CD8-positive, alpha-beta T cell (primary cell): ENCODE measurements at regions of chr16 and their contacts with region 1.

Region 1: DNA sequence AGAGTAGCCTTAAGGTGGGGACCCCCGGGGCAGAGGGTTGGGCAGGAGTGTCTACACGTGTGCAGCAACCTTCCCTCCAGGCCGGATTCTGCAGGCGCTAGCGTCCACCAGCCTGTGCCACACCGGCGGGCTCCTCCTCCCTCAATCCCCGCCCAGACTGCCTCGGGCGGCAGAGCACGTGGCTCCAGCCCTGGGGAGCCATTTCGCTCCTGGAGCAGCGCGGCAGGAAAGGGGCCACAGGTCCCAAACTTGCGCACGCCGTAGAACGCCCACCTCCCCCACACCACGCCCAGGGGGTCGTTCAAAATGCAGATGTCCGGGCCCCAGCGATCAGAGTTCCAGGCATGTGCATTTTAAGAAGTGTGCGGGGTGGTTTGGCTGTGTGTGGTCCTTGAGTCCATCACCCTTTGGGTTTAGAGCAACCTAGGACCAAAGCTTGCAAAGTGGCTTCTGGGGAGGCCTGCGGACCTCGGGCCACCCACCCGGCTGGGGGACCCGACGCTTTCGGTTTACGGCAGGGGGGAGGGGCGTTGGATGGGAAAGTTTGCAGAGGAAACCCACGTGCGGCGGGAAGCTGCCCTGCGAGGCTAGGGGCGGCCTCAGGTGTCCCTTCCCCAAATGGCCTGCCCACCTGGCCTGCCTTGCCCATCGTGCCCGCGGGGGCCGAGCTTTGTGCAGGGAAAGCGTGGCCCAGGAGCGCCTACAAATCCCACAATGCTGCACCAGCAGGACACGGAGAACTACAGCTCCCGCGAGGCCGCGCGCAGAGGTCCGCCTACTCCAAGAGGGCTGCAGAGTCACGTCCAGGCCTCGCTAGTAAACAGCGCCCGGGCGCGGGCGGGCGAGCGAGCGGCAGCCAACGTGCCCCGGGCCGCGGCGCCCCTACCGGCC is 1.4 kb downstream of the TFAP4 start:
- DNase-seq: peak; percentile 72 to 93 (median 89)
- ATAC-seq: peak; percentile 84
- H3K4me3 ChIP-seq: peak overlapping the region; percentile 91 to 99
- H3K4me3 Mint-ChIP-seq: peak overlapping the region; percentile 88
- H3K27ac ChIP-seq: peak overlapping the region; percentile 50 to 76
- H3K27ac Mint-ChIP-seq: peak overlapping the region; percentile 57
- H3K4me1 ChIP-seq: peaks cover 13% of the 10 kb centered on the region
- H3K4me1 Mint-ChIP-seq: peaks cover 15% of the 10 kb centered on the region
- H3K27me3 ChIP-seq: no peaks in the 10 kb centered on the region
- H3K27me3 Mint-ChIP-seq: no peaks in the 10 kb centered on the region
- CTCF ChIP-seq: no peak

Region 2: DNA sequence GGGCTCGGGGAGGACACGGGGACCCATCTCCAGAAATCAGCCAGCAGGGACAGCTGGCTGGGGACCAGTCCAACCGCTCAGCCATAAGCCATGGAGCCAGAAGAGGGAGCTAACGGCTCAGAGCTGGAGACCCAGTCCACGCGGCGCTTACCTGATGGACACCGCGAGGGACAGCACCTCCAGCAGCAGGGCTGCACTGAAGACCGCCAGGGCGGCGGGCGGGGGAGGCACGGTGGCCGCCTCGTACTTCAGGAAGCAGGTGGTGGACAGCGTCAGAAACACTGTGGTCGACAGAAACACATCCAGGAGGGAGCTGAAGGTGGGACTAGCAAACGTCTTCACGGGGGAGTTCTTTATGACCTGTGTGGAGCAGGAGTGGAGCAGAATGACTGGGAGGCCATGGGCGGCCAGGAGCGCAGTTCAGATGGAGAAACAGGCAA is 288.3 kb before region 1 on chr16:
- CTCF ChIA-PET with region 1: no interaction called
- POLR2A ChIA-PET with region 1: no interaction called
- intact Hi-C with region 1: loop called in 1 of 2 experiments (anchors 5 kb)
- DNase-seq: peak in 8 of 9 experiments; percentile 9 to 68 (median 48)
- ATAC-seq: peak; percentile 48
- H3K4me3 ChIP-seq: no peak overlapping the region
- H3K4me3 Mint-ChIP-seq: no peak overlapping the region
- H3K27ac ChIP-seq: no peak overlapping the region
- H3K27ac Mint-ChIP-seq: no peak overlapping the region
- H3K4me1 ChIP-seq: peaks cover 4% of the 10 kb centered on the region
- H3K4me1 Mint-ChIP-seq: peaks cover 4% of the 10 kb centered on the region
- H3K27me3 ChIP-seq: no peaks in the 10 kb centered on the region
- H3K27me3 Mint-ChIP-seq: no peaks in the 10 kb centered on the region
- CTCF ChIP-seq: peak; percentile 31

Region 3: DNA sequence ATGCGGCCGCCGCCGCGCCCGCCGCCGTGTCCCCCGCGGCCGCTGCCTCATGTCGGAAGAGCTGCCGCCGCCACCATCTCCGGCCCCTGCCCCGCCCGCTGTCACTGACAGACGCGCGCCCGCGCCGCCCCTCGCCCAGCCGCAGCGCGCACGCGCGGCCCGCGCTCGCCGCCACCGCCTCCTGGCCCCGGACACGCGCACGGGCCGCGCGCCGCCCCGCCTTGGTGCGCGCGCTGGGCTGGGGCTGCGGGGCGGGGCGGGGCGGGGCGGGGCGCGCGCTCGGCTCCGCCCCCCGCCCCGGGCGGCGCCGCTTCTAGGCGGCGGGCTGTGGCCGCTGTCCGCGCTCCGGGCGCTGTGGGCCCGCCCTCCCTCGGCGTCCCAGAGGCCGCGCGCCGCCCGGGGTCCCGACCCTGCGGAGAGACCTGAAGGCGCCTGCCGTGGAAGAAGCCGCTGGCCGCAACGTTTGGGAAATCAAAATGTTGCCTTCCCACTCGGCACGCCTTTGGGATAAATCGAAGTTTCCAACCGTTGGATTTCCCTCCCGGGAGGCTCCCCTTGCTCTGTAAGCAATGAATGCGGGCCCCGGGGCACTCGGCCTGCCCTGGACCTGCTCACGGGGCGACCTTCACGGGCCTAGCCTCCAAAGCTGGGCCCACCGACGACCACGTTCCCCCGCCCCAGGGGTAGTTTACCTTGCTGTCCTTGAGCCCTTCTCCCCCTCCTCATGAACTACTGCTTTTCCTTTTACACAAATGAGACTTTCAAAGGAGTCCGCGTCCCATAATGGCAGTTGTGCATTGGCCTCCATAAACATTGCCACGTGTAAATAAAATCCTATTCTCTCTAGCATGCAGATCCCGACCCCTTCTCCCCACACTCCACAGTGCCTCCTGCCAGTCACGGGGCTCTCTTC is 154.8 kb before region 1 on chr16 and contains the start of gene ADCY9:
- CTCF ChIA-PET with region 1: no interaction called
- POLR2A ChIA-PET with region 1: interaction called, 5 read pairs
- intact Hi-C with region 1: loop called in 1 of 2 experiments (anchors 5 kb)
- DNase-seq: peak; percentile 31 to 92 (median 74)
- ATAC-seq: peak; percentile 77
- H3K4me3 ChIP-seq: peak within 1 kb of the TSS; percentile 55 to 64
- H3K4me3 Mint-ChIP-seq: peak within 1 kb of the TSS; percentile 87
- H3K27ac ChIP-seq: peak within 1 kb of the TSS in 1 of 2 experiments; percentile 39
- H3K27ac Mint-ChIP-seq: peak within 1 kb of the TSS; percentile 52
- H3K4me1 ChIP-seq: peaks cover 33% of the 10 kb centered on the region
- H3K4me1 Mint-ChIP-seq: peaks cover 40% of the 10 kb centered on the region
- H3K27me3 ChIP-seq: no peaks in the 10 kb centered on the region
- H3K27me3 Mint-ChIP-seq: peaks cover 3% of the 10 kb centered on the region
- CTCF ChIP-seq: no peak
- total RNA-seq, gene ADCY9: 4.2 to 4.3 TPM

Region 4: GRCh38 chr16:4160658-4161430 is 110.6 kb before region 1 on chr16:
- CTCF ChIA-PET with region 1: no interaction called
- POLR2A ChIA-PET with region 1: no interaction called
- intact Hi-C with region 1: no loop called
- DNase-seq: no peak
- ATAC-seq: no peak
- H3K4me3 ChIP-seq: no peak overlapping the region
- H3K4me3 Mint-ChIP-seq: no peak overlapping the region
- H3K27ac ChIP-seq: no peak overlapping the region
- H3K27ac Mint-ChIP-seq: no peak overlapping the region
- H3K4me1 ChIP-seq: no peaks in the 10 kb centered on the region
- H3K4me1 Mint-ChIP-seq: no peaks in the 10 kb centered on the region
- H3K27me3 ChIP-seq: no peaks in the 10 kb centered on the region
- H3K27me3 Mint-ChIP-seq: no peaks in the 10 kb centered on the region
- CTCF ChIP-seq: no peak

Region 5: DNA sequence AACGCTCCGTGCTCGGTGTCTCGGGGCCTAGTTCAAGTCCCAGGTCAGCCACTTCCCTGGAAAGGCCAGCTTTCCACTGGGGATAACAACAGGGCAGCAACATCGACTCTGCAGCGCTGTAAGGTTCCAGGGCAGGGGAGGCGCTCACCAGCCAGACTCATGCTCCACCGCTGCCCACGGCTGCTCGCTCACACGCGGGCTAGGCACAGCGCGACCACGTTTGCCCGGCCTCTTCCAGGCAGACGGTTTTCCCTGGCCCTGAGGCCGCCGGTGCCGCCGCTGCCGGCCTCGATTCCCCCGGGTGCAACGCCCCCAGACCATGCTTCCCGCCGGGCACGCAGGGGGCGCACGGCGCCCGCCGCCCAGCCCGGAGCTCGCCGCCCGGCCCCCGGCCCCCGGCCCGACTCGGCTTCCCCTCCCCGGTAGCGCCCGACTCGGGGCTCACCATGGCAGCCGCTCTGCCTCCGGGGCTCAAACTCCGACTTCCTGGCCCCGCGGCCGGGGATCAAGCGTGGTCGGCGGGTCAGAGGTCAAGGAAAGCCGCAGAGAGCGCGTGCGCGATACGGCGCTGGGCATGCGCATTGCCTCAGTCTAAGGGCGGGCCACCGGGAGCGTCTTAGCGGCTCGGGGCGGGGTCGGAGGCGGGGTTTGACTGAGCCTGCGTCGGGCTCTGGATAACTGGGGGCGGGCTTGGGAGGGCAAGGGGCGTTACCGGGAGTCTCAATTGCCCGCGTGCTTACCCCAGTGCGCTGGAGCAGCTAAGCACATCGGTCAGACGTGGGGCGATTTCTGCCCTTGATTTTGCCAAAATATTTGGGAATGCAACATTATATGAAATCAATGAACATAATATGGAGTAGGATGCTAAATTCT is 79.6 kb after region 1 on chr16 and contains the start of gene PAM16:
- CTCF ChIA-PET with region 1: no interaction called
- POLR2A ChIA-PET with region 1: interaction called, 6 read pairs
- intact Hi-C with region 1: loop called in 1 of 2 experiments (anchors 2 kb)
- DNase-seq: peak; percentile 93 to 99 (median 98)
- ATAC-seq: peak; percentile 89
- H3K4me3 ChIP-seq: peak within 1 kb of the TSS; percentile 92
- H3K4me3 Mint-ChIP-seq: peak within 1 kb of the TSS; percentile 93
- H3K27ac ChIP-seq: peak within 1 kb of the TSS; percentile 80 to 82
- H3K27ac Mint-ChIP-seq: peak within 1 kb of the TSS; percentile 90
- H3K4me1 ChIP-seq: peaks cover 16% of the 10 kb centered on the region
- H3K4me1 Mint-ChIP-seq: peaks cover 42% of the 10 kb centered on the region
- H3K27me3 ChIP-seq: no peaks in the 10 kb centered on the region
- H3K27me3 Mint-ChIP-seq: no peaks in the 10 kb centered on the region
- CTCF ChIP-seq: no peak
- total RNA-seq, gene PAM16: 30.9 to 31.4 TPM

Region 6: GRCh38 chr16:4416200-4417032 is 145.0 kb after region 1 on chr16 and contains the start of gene CORO7:
- CTCF ChIA-PET with region 1: no interaction called
- POLR2A ChIA-PET with region 1: interaction called, 3 read pairs
- intact Hi-C with region 1: loop called (anchors 1 kb)
- DNase-seq: peak; percentile 98 to 100 (median 99)
- ATAC-seq: peak; percentile 78
- H3K4me3 ChIP-seq: peak within 1 kb of the TSS; percentile 51 to 60
- H3K4me3 Mint-ChIP-seq: peak within 1 kb of the TSS; percentile 97
- H3K27ac ChIP-seq: peak within 1 kb of the TSS; percentile 89 to 94
- H3K27ac Mint-ChIP-seq: peak within 1 kb of the TSS; percentile 99
- H3K4me1 ChIP-seq: peaks cover 44% of the 10 kb centered on the region
- H3K4me1 Mint-ChIP-seq: peaks cover 33% of the 10 kb centered on the region
- H3K27me3 ChIP-seq: no peaks in the 10 kb centered on the region
- H3K27me3 Mint-ChIP-seq: no peaks in the 10 kb centered on the region
- CTCF ChIP-seq: no peak
- total RNA-seq, gene CORO7: 950 to 991 TPM

Region 7: GRCh38 chr16:4461250-4462085 is 190.0 kb after region 1 on chr16:
- CTCF ChIA-PET with region 1: no interaction called
- POLR2A ChIA-PET with region 1: no interaction called
- intact Hi-C with region 1: no loop called
- DNase-seq: no peak
- ATAC-seq: no peak
- H3K4me3 ChIP-seq: no peak overlapping the region
- H3K4me3 Mint-ChIP-seq: no peak overlapping the region
- H3K27ac ChIP-seq: no peak overlapping the region
- H3K27ac Mint-ChIP-seq: no peak overlapping the region
- H3K4me1 ChIP-seq: peaks cover 24% of the 10 kb centered on the region
- H3K4me1 Mint-ChIP-seq: peaks cover 24% of the 10 kb centered on the region
- H3K27me3 ChIP-seq: no peaks in the 10 kb centered on the region
- H3K27me3 Mint-ChIP-seq: no peaks in the 10 kb centered on the region
- CTCF ChIP-seq: no peak

Region 8: DNA sequence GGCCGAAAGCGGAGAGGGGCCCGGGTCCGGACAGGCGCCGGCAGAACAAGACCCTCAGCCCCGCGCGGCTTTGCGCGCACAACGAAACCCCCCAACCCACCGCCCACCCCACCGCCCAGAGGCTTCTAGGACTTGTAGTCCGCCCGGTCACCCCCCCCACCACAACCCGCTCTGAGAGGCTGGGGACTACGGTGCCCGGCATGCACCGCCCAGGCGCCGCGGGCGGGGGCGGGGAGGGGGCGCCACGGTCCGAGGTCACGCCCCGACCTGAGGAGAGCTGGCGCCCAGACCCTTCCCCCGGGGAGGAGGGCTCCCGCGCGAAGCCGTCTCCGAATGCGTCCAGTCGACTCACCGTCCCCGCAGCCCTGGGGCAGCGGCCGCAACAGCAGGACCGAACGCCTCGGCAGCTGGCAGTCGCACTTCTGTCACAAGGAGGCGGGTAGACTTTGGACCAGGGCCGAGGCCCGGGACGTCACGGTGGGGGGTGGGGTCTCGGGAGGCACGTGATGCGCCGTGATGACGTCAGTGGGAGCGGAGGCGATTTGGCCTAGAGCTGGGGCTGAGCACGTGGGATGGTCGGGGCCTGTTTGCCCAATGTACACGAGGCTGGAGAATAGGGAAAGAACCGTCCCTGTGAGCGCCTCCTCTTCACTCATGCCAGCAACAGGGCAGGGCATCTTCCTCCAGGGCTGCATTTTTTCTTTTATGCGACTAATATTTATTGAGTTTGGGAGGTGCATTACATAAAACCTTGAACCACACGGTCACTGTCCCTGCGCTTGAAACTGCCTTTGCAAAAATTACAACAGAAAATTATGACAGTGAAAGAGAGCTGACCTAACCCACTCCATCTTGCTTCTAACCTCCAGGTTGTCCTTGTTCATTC is 267.2 kb after region 1 on chr16 and contains the start of gene CDIP1:
- CTCF ChIA-PET with region 1: no interaction called
- POLR2A ChIA-PET with region 1: no interaction called
- intact Hi-C with region 1: loop called in 1 of 2 experiments (anchors 5 kb)
- DNase-seq: peak; percentile 88 to 98 (median 94)
- ATAC-seq: peak; percentile 86
- H3K4me3 ChIP-seq: peak within 1 kb of the TSS; percentile 71
- H3K4me3 Mint-ChIP-seq: peak within 1 kb of the TSS; percentile 80
- H3K27ac ChIP-seq: peak within 1 kb of the TSS; percentile 86 to 90
- H3K27ac Mint-ChIP-seq: peak within 1 kb of the TSS; percentile 92
- H3K4me1 ChIP-seq: peaks cover 45% of the 10 kb centered on the region
- H3K4me1 Mint-ChIP-seq: peaks cover 39% of the 10 kb centered on the region
- H3K27me3 ChIP-seq: no peaks in the 10 kb centered on the region
- H3K27me3 Mint-ChIP-seq: no peaks in the 10 kb centered on the region
- CTCF ChIP-seq: no peak
- total RNA-seq, gene CDIP1: 21.7 to 25.0 TPM

Region 9: GRCh38 chr16:4734063-4734729 is 462.8 kb after region 1 on chr16 and contains the starts of genes ANKS3 and DNAAF8:
- CTCF ChIA-PET with region 1: no interaction called
- POLR2A ChIA-PET with region 1: interaction called, 4 read pairs
- intact Hi-C with region 1: loop called in 1 of 2 experiments (anchors 1 kb)
- DNase-seq: peak; percentile 47 to 90 (median 79)
- ATAC-seq: peak; percentile 73
- H3K4me3 ChIP-seq: peak within 1 kb of the TSS; percentile 81 to 96
- H3K4me3 Mint-ChIP-seq: peak within 1 kb of the TSS; percentile 91
- H3K27ac ChIP-seq: peak within 1 kb of the TSS; percentile 69 to 75
- H3K27ac Mint-ChIP-seq: peak within 1 kb of the TSS; percentile 92
- H3K4me1 ChIP-seq: peaks cover 13% of the 10 kb centered on the region
- H3K4me1 Mint-ChIP-seq: peaks cover 17% of the 10 kb centered on the region
- H3K27me3 ChIP-seq: no peaks in the 10 kb centered on the region
- H3K27me3 Mint-ChIP-seq: no peaks in the 10 kb centered on the region
- CTCF ChIP-seq: no peak
- total RNA-seq, gene ANKS3: 8.6 to 11.8 TPM
- total RNA-seq, gene DNAAF8: not detected